ENCODE measurements at regions of chr19 and their contacts with region 1.

Region 1: GRCh38 chr19:39833464-39834286 is at the start of gene DYRK1B:
- DNase-seq: peak; percentile 90
- ATAC-seq: peak; percentile 86
- H3K4me3 Mint-ChIP-seq: peak within 1 kb of the TSS; percentile 82
- H3K27ac Mint-ChIP-seq: peak within 1 kb of the TSS; percentile 87
- H3K4me1 Mint-ChIP-seq: peaks cover 33% of the 10 kb centered on the region
- H3K27me3 Mint-ChIP-seq: no peaks in the 10 kb centered on the region
- CTCF ChIP-seq: no peak
- total RNA-seq, gene DYRK1B: 16.9 and 17.2 TPM in 2 replicates

Region 2: GRCh38 chr19:39539519-39540332 is 293.9 kb before region 1 on chr19 and contains the start of gene EID2:
- CTCF ChIA-PET with region 1: no interaction called
- POLR2A ChIA-PET with region 1: no interaction called
- intact Hi-C with region 1: loop called (anchors 5 kb)
- DNase-seq: peak; percentile 88
- ATAC-seq: peak; percentile 95
- H3K4me3 Mint-ChIP-seq: peak within 1 kb of the TSS; percentile 95
- H3K27ac Mint-ChIP-seq: peak within 1 kb of the TSS; percentile 93
- H3K4me1 Mint-ChIP-seq: peaks cover 40% of the 10 kb centered on the region
- H3K27me3 Mint-ChIP-seq: no peaks in the 10 kb centered on the region
- CTCF ChIP-seq: no peak
- total RNA-seq, gene EID2: 11.4 and 11.5 TPM in 2 replicates

Region 3: DNA sequence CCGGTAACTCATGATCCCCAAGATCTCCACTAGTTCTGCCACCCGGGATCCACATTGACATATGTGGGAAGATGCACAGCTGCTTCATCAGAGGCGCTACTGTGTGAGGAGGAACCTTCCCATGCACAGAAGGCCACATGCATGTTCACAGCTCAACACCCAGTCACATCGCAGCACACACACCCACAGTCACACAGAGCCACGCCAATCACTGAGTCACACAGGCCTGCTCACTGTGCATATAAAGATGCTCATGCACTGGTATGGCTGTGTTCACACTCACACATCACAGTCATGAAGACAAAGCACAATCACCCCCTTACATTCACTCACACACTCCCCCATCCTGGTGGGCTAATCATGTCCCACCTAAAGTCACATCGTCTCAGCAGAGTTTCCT is 105.6 kb before region 1 on chr19:
- CTCF ChIA-PET with region 1: no interaction called
- POLR2A ChIA-PET with region 1: no interaction called
- intact Hi-C with region 1: no loop called
- DNase-seq: no peak
- ATAC-seq: no peak
- H3K4me3 Mint-ChIP-seq: no peak overlapping the region
- H3K27ac Mint-ChIP-seq: no peak overlapping the region
- H3K4me1 Mint-ChIP-seq: no peaks in the 10 kb centered on the region
- H3K27me3 Mint-ChIP-seq: peaks cover 38% of the 10 kb centered on the region
- CTCF ChIP-seq: no peak

Region 4: GRCh38 chr19:39906820-39907611 is 73.3 kb after region 1 on chr19:
- CTCF ChIA-PET with region 1: no interaction called
- POLR2A ChIA-PET with region 1: no interaction called
- intact Hi-C with region 1: no loop called
- DNase-seq: no peak
- ATAC-seq: no peak
- H3K4me3 Mint-ChIP-seq: no peak overlapping the region
- H3K27ac Mint-ChIP-seq: no peak overlapping the region
- H3K4me1 Mint-ChIP-seq: peaks cover 5% of the 10 kb centered on the region
- H3K27me3 Mint-ChIP-seq: no peaks in the 10 kb centered on the region
- CTCF ChIP-seq: no peak

Region 5: DNA sequence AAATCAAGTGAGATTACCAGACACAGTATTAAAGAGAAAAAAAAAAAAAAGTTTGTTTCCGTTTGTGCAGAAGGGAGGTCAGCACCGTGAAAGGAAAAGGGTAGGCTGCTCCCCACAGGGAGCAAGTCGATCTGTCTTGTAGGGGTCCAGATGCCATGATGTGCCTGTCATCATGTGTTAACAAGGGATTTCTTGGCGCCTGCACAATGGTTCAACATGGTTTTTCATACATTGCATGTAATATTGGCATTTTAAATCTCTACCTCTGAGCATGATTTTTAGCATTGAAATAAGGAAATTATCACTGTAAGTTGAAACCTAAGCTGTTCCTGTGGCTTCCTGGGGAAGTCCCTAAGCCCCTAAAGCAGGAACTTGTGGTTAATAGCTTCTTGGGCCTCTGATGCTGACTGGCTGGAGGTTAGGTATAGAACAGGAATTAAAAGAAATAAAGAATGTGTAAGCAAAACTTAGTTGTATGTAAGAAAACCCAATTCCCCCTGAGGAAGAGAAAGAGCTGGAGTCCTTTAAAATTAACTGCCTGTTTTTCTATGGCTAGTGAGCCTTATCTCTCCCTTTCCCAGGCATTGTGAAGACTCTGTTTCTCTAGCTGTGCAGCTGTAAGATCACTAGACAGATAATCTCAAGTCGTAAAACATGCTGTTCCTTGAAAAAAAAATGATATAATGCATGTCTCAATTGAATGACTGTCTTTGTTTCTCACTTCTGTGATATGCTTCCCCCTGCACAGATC is 108.1 kb after region 1 on chr19:
- CTCF ChIA-PET with region 1: no interaction called
- POLR2A ChIA-PET with region 1: no interaction called
- intact Hi-C with region 1: loop called (anchors 5 kb)
- DNase-seq: peak; percentile 29
- ATAC-seq: peak; percentile 82
- H3K4me3 Mint-ChIP-seq: peak overlapping the region; percentile 77
- H3K27ac Mint-ChIP-seq: peak overlapping the region; percentile 88
- H3K4me1 Mint-ChIP-seq: peaks cover 77% of the 10 kb centered on the region
- H3K27me3 Mint-ChIP-seq: no peaks in the 10 kb centered on the region
- CTCF ChIP-seq: no peak

Region 6: GRCh38 chr19:40331069-40331468 is 497.4 kb after region 1 on chr19:
- CTCF ChIA-PET with region 1: no interaction called
- POLR2A ChIA-PET with region 1: no interaction called
- intact Hi-C with region 1: no loop called
- DNase-seq: no peak
- ATAC-seq: no peak
- H3K4me3 Mint-ChIP-seq: no peak overlapping the region
- H3K27ac Mint-ChIP-seq: no peak overlapping the region
- H3K4me1 Mint-ChIP-seq: no peaks in the 10 kb centered on the region
- H3K27me3 Mint-ChIP-seq: no peaks in the 10 kb centered on the region
- CTCF ChIP-seq: no peak

Measured in activated B cell treated with CpG ODN at 0.5 μM for 24 hours (primary cell).